Activated T-helper 1 cell treated with anti-CD3 and anti-CD28 coated beads, Interleukin-12 subunit alpha, Interleukin-12 subunit beta, Interleukin-2, Interleukin-4 antibody, amounts not matched to agents 30 ng/mL and 10 ng/mL and 1 ng/mL, durations not matched to agents 14 hours and 24 hours and 36 hours (primary cell): ENCODE measurements at regions of chr15 and their contacts with region 1.

Region 1: GRCh38 chr15:38690689-38691332 is 126.2 kb upstream of the RASGRP1 start:
- DNase-seq: peak; percentile 75
- H3K4me3 Mint-ChIP-seq: no peak overlapping the region
- H3K27ac Mint-ChIP-seq: peak overlapping the region; percentile 73
- H3K4me1 Mint-ChIP-seq: peaks cover 90% of the 10 kb centered on the region
- H3K27me3 Mint-ChIP-seq: no peaks in the 10 kb centered on the region

Region 2: DNA sequence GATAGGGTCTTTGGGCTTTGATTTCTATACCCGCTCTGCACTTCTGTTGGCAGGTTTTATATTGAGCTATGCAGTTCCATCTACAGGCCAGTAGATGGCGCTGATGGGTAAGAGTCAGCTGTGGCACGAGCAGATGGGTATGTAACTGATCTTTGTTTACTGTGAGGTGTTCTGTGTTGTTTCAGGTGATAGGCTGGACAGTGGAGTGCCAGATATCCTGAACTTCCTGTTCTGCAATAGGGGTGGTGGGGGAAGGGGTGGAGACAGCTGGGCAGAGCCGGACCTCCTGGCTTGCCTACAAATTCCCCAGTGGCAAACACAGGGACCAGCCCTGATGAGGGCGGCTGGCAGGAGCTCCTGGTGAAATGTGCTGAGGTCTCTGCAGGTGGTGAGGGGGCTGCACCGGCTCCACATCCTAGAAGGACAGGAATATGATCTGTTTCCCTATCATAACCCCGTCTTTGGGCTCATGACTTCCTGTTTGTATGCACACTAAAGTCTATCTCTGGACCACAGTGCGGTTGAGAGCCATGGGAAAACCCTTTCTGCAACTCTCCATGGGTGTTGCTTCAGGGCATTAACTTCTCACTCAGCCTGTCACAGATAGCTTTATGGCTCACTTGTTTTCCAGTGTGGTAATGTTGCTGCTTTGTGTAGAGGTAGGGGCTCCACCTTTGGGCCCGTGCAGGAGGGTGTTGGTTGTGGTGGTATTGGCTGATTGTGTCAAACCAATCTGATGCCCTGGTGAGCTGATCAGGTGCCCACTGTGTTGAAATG is 250.3 kb before region 1 on chr15:
- intact Hi-C with region 1: loop called (anchors 1 kb)
- DNase-seq: peak; percentile 38
- H3K4me3 Mint-ChIP-seq: no peak overlapping the region
- H3K27ac Mint-ChIP-seq: peak overlapping the region; percentile 56
- H3K4me1 Mint-ChIP-seq: peaks cover 18% of the 10 kb centered on the region
- H3K27me3 Mint-ChIP-seq: peaks cover 50% of the 10 kb centered on the region

Region 3: GRCh38 chr15:38453971-38454695 is 236.7 kb before region 1 on chr15 and contains the start of gene FAM98B:
- intact Hi-C with region 1: loop called (anchors 1 kb)
- DNase-seq: peak; percentile 85
- H3K4me3 Mint-ChIP-seq: peak within 1 kb of the TSS; percentile 96
- H3K27ac Mint-ChIP-seq: peak within 1 kb of the TSS; percentile 95
- H3K4me1 Mint-ChIP-seq: peaks cover 22% of the 10 kb centered on the region
- H3K27me3 Mint-ChIP-seq: peaks cover 19% of the 10 kb centered on the region
- total RNA-seq, gene FAM98B: 64.4 and 66.9 TPM in 2 replicates

Region 4: DNA sequence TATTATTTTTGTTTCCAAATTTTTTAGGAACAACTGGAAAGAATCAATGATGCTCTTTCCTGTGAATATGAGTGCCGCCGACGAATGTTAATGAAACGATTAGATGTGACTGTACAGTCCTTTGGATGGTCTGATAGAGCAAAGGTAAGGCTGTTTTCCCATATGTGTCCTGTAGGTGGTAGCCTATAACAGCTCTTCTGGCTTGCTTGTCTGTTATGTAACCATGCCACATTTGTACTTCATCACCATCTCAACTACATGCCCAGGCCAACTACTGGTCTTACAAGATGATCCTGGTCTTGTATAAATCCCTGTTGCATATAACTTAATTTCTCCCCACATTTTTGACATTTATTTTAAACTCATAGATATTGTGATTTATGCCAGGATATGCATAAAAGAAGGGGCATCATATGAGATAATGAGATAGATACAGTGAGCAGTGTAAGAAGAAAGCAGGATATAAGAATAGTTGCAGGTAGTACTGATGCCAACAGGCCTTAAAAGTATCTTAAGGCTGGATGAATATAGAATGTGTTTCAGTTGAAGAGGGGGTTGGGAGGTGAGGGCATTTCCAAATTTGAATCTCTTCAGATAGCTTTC is 216.6 kb before region 1 on chr15:
- intact Hi-C with region 1: loop called (anchors 1 kb)
- DNase-seq: peak; percentile 29
- H3K4me3 Mint-ChIP-seq: no peak overlapping the region
- H3K27ac Mint-ChIP-seq: peak overlapping the region; percentile 41
- H3K4me1 Mint-ChIP-seq: peaks cover 20% of the 10 kb centered on the region
- H3K27me3 Mint-ChIP-seq: no peaks in the 10 kb centered on the region

Region 5: DNA sequence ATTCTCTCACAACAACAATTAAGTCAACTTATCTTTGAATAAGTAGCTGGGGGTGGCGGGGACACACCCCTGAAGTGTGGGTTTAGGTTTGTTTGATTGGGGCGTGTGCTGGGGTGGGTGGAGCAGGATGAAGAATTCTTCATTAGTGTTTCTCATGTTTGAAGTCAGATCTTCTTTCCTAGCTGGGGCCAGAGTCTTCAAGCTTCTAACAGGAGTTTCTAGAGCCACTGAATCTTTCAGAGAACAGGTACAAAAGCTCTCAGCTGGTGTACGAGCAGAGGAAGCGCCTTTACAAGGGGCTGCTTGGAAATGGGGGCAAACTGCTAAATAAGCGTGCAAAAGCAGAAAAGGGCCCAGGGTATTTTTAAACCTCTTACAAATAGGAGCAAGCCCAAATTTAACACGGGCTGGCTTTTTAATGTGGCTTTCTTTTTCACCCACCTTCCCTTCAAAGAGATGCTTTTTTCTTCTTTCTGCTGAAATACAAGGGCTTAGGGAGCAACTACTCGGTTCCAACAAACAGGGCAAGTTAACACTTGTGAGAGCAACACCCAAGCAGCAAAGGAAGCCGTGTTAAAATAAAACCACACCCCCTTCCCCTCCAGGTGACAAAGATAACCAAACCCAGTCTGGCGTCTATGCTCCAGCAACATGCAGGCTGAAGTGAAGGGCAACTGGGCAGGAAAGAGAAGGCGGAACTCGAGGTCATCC is 39.3 kb before region 1 on chr15:
- intact Hi-C with region 1: loop called (anchors 1 kb)
- DNase-seq: peak; percentile 57
- H3K4me3 Mint-ChIP-seq: peak overlapping the region; percentile 79
- H3K27ac Mint-ChIP-seq: peak overlapping the region; percentile 94
- H3K4me1 Mint-ChIP-seq: peaks cover 93% of the 10 kb centered on the region
- H3K27me3 Mint-ChIP-seq: no peaks in the 10 kb centered on the region

Region 6: GRCh38 chr15:39140060-39140604 is 449.3 kb after region 1 on chr15:
- intact Hi-C with region 1: loop called (anchors 5 kb)
- DNase-seq: peak; percentile 14
- H3K4me3 Mint-ChIP-seq: no peak overlapping the region
- H3K27ac Mint-ChIP-seq: peak overlapping the region; percentile 37
- H3K4me1 Mint-ChIP-seq: peaks cover 54% of the 10 kb centered on the region
- H3K27me3 Mint-ChIP-seq: no peaks in the 10 kb centered on the region